Naive thymus-derived CD4-positive, alpha-beta T cell (primary cell): ENCODE measurements at regions of chr9 and their contacts with region 1.

Region 1: GRCh38 chr9:75130621-75131230 is 42.4 kb downstream of the OSTF1 start:
- DNase-seq: no peak
- ATAC-seq: no peak
- H3K4me3 ChIP-seq: no peak overlapping the region
- H3K4me3 Mint-ChIP-seq: no peak overlapping the region
- H3K27ac ChIP-seq: no peak overlapping the region
- H3K27ac Mint-ChIP-seq: peak overlapping the region in 7 of 9 donors; percentile 9 to 74 (median 56)
- H3K4me1 ChIP-seq: peaks cover 0 to 6% of the 10 kb centered on the region in 2 donors
- H3K4me1 Mint-ChIP-seq: peaks cover 10 to 77% (median 50%) of the 10 kb centered on the region in 7 donors
- H3K27me3 ChIP-seq: no peaks in the 10 kb centered on the region
- H3K27me3 Mint-ChIP-seq: no peaks in the 10 kb centered on the region

Region 2: DNA sequence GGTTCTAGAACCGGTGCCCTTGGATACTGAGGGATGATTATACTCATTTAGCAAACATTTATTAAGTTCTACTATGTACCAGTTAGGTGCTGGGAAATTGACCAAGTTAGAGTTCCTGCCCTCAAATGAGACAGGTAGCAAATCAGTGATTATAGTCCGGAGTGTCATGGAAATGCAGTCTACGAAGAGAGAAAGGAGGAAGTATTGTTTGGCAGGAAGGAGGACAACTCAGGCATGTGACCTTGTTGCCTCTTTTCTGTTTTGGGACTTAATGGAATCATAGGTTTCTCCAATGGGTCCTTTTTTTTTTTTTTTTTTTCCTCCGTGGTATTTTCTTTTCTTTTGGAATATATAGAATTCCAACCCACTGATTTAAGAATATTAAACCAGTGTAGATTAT is 14.4 kb before region 1 on chr9:
- CTCF ChIA-PET with region 1: interaction called, 4 read pairs
- POLR2A ChIA-PET with region 1: no interaction called
- intact Hi-C with region 1: loop called in 1 of 2 experiments (anchors 2 kb)
- DNase-seq: no peak
- ATAC-seq: no peak
- H3K4me3 ChIP-seq: no peak overlapping the region
- H3K4me3 Mint-ChIP-seq: peak overlapping the region in 1 of 10 donors; percentile 9
- H3K27ac ChIP-seq: no peak overlapping the region
- H3K27ac Mint-ChIP-seq: peak overlapping the region in 3 of 9 donors; percentile 22 to 84 (median 39)
- H3K4me1 ChIP-seq: peaks cover 0 to 3% of the 10 kb centered on the region in 2 donors
- H3K4me1 Mint-ChIP-seq: peaks cover 36 to 73% (median 56%) of the 10 kb centered on the region in 7 donors
- H3K27me3 ChIP-seq: no peaks in the 10 kb centered on the region
- H3K27me3 Mint-ChIP-seq: no peaks in the 10 kb centered on the region